ENCODE measurements at regions of chr14 and their contacts with region 1.

Region 1: DNA sequence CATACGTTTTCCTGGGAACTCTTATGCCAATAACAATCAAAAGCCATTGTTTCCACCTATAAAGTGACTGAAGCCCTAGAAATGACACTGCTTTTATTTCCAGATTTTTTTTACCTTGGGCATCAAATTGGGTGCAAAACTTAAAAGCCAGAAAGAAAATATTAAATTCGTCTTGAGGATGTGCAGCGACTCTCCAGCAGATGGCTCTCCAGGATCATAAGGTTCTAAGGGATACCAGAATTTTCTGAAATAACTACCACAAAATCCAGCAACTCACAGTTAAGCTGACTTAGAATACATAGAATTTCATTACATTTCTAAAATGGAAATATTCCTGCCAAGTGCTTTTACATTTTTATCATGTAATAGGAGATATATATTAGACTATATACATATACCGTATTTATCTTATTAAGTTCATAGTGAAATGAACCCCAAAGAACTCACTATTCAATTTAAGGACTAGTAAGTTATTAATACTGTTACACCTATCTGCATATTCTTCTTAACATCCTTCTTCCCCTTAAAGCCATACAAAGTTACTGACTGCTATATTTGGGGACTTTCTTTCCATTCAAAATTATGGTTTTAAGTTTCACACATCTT is 44.0 kb downstream of the ARMH4 start:
- DNase-seq: no peak
- ATAC-seq: peak; percentile 71 to 87 (median 74)
- H3K4me3 ChIP-seq: no peak overlapping the region
- H3K27ac ChIP-seq: no peak overlapping the region
- H3K4me1 ChIP-seq: no peaks in the 10 kb centered on the region
- H3K27me3 ChIP-seq: no peaks in the 10 kb centered on the region
- CTCF ChIP-seq: peak; percentile 72 to 80 (median 72)
- POLR2A ChIP-seq: no peak

Region 2: GRCh38 chr14:57854571-57854970 is 253.5 kb before region 1 on chr14:
- intact Hi-C with region 1: no loop called
- DNase-seq: no peak
- ATAC-seq: no peak
- H3K4me3 ChIP-seq: no peak overlapping the region
- H3K27ac ChIP-seq: no peak overlapping the region
- H3K4me1 ChIP-seq: no peaks in the 10 kb centered on the region
- H3K27me3 ChIP-seq: no peaks in the 10 kb centered on the region
- CTCF ChIP-seq: no peak
- POLR2A ChIP-seq: no peak

Region 3: DNA sequence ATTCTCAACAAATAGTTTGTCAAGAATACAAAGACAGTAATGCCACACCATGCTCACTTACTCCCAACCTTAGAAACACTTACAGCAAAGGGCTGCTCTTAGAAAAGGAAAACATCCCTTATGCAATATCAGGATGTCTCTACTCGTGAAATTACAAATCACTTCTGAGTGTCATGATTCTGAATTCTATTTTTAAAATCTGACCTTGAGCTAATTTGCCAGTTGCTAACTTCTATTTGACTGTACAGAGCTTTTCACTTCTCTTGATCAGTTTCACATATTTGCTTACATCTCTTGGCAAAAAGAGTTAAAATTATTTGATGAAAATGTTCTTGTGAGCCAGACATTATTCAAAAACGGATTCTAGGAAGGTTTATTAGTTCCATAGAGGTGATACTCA is 105.4 kb before region 1 on chr14:
- intact Hi-C with region 1: no loop called
- DNase-seq: no peak
- ATAC-seq: no peak
- H3K4me3 ChIP-seq: no peak overlapping the region
- H3K27ac ChIP-seq: no peak overlapping the region
- H3K4me1 ChIP-seq: no peaks in the 10 kb centered on the region
- H3K27me3 ChIP-seq: no peaks in the 10 kb centered on the region
- CTCF ChIP-seq: no peak
- POLR2A ChIP-seq: no peak

Region 4: GRCh38 chr14:58152014-58152857 is 44.2 kb after region 1 on chr14 and contains the start of gene ARMH4:
- intact Hi-C with region 1: loop called in 1 of 2 experiments (anchors 10 kb)
- DNase-seq: peak; percentile 90 to 93 (median 91)
- ATAC-seq: peak; percentile 99
- H3K4me3 ChIP-seq: peak within 1 kb of the TSS; percentile 72 to 91 (median 79)
- H3K27ac ChIP-seq: peak within 1 kb of the TSS in 1 of 3 donors; percentile 22
- H3K4me1 ChIP-seq: peaks cover 0 to 10% (median 3%) of the 10 kb centered on the region in 4 donors
- H3K27me3 ChIP-seq: no peaks in the 10 kb centered on the region
- CTCF ChIP-seq: peak in 3 of 4 donors; percentile 24 to 43 (median 36)
- POLR2A ChIP-seq: peak; percentile 37
- total RNA-seq, gene ARMH4: 0.25 to 2.1 (median 0.62) TPM